ENCODE measurements at regions of chr12 and their contacts with region 1.

Region 1: GRCh38 chr12:77724367-77724957 is 106.2 kb upstream of the NAV3 start:
- DNase-seq: peak; percentile 70
- H3K4me3 ChIP-seq: no peak overlapping the region
- H3K27ac ChIP-seq: no peak overlapping the region
- H3K4me1 ChIP-seq: peaks cover 14% of the 10 kb centered on the region; the same call in 1 of the 2 replicates
- H3K27me3 ChIP-seq: no peaks in the 10 kb centered on the region

Region 2: DNA sequence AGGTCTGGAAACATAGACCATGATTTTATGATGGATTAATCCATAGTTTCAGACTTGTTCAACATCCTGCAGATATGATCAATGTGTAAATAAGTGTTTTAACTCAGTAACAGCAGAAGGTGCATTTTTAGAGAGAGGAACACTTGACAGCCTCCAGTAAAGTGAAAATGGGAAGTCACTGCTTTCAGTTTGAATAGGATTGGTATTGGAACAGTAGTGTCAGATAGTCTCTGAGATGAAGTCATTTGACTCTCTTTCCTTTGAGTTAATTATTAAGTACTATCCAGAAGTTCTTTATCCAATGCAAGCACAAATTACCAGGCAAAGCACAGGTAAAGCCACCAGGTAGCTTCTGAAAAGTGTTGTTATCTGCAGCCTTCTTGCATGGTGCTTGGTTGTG is 91.7 kb after region 1 on chr12:
- in situ Hi-C with region 1: loop called (anchors 25 kb)
- DNase-seq: no peak
- H3K4me3 ChIP-seq: no peak overlapping the region
- H3K27ac ChIP-seq: no peak overlapping the region
- H3K4me1 ChIP-seq: no peaks in the 10 kb centered on the region
- H3K27me3 ChIP-seq: peaks cover 20% of the 10 kb centered on the region; the same call in 1 of the 2 replicates

Region 3: GRCh38 chr12:77932216-77932615 is 207.8 kb after region 1 on chr12:
- in situ Hi-C with region 1: loop called (anchors 5 kb)
- DNase-seq: no peak
- H3K4me3 ChIP-seq: no peak overlapping the region
- H3K27ac ChIP-seq: no peak overlapping the region
- H3K4me1 ChIP-seq: no peaks in the 10 kb centered on the region
- H3K27me3 ChIP-seq: no peaks in the 10 kb centered on the region

Measured in GM23248 (cell line).